ENCODE measurements at regions of chr15 and their contacts with region 1.

Region 1: DNA sequence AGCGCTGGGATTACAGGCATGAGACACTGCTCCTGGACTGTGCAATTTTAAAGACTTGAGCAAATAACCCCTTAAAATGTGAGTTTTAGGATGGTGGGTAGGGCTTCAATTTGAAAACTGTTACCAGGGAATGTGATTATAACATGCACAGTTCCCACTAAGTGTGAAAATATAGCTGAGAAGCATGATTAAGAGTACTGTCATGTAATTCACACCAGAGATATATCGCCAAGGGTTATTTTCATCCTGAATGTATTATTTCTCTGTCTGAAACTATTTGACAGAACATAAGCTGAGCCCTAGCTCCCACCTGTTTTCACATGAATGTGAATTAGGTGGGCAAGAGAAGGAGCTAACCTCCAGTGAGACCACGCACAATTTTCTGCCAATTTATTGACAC is 457.2 kb downstream of the GABRG3 start:
- DNase-seq: no peak
- H3K4me3 ChIP-seq: no peak overlapping the region
- H3K27ac ChIP-seq: no peak overlapping the region
- H3K4me1 ChIP-seq: no peaks in the 10 kb centered on the region
- H3K27me3 ChIP-seq: no peaks in the 10 kb centered on the region
- CTCF ChIP-seq: no peak
- EP300 ChIP-seq: no peak
- POLR2A ChIP-seq: no peak

Region 2: DNA sequence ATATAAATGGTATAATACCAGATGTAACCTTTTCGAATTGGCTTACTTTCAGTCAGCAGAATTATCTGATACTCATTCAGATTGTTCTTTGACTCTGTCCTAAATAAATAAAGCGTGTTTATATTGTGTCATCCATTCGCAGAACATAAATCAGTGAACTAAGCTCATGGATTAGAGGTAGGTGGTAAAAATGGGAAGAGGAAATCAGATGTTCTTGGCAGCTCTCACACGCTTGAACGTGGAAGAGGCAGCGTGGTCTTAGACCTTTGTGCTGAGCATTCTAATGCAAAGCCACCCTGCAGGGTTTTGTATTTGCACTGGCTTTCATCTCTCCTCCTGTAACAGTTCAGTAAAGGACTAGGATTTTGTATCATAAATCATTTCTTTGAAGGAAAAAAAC is 15.7 kb before region 1 on chr15:
- in situ Hi-C with region 1: no loop called
- intact Hi-C with region 1: no loop called
- DNase-seq: no peak
- H3K4me3 ChIP-seq: no peak overlapping the region
- H3K27ac ChIP-seq: no peak overlapping the region
- H3K4me1 ChIP-seq: no peaks in the 10 kb centered on the region
- H3K27me3 ChIP-seq: no peaks in the 10 kb centered on the region
- CTCF ChIP-seq: no peak
- EP300 ChIP-seq: no peak
- POLR2A ChIP-seq: no peak

Region 3: GRCh38 chr15:27454281-27455075 is 26.3 kb after region 1 on chr15:
- in situ Hi-C with region 1: no loop called
- intact Hi-C with region 1: loop called (anchors 2 kb)
- DNase-seq: no peak
- H3K4me3 ChIP-seq: no peak overlapping the region
- H3K27ac ChIP-seq: no peak overlapping the region
- H3K4me1 ChIP-seq: no peaks in the 10 kb centered on the region
- H3K27me3 ChIP-seq: no peaks in the 10 kb centered on the region
- CTCF ChIP-seq: no peak
- EP300 ChIP-seq: no peak
- POLR2A ChIP-seq: no peak

Region 4: DNA sequence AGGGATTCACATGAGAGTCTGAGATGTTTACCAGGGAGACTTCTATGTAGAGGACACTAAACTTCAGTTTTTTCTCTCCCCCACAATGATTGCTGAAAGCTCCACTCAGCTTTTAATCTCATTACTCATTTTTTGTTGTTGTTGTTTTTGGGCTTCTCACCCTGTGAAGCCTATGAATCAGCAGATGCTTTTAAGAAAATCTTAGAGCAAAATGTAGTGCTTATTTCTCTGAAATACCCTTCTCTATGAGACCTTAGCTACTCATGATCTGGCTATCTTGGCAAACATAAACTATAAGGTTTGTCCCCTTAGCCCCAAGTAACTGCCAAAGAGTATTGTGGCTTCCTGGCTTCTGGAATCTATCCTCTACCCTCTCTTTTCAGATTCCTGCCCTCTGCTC is 133.7 kb after region 1 on chr15:
- in situ Hi-C with region 1: no loop called
- intact Hi-C with region 1: no loop called
- DNase-seq: no peak
- H3K4me3 ChIP-seq: no peak overlapping the region
- H3K27ac ChIP-seq: no peak overlapping the region
- H3K4me1 ChIP-seq: no peaks in the 10 kb centered on the region
- H3K27me3 ChIP-seq: no peaks in the 10 kb centered on the region
- CTCF ChIP-seq: no peak
- EP300 ChIP-seq: no peak
- POLR2A ChIP-seq: no peak

Region 5: DNA sequence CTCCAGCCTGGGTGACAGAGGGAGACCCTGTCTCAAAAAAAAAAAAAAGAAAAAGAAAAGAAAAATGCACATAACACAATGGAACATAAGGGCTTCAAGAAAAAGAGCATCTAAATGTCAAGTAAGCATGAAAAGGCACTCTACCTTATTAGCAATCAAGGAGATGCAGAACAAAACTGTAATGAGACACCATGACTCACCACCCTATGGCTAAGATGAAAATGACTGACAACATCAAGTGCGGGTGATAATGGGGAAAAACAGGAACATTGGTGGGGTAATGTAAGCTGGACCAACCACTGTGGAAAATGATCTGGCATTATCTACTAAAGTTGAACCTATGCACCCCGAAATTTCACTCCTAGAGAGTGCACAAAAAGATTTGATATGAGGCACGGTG is 1861.0 kb after region 1 on chr15:
- in situ Hi-C with region 1: no loop called
- intact Hi-C with region 1: no loop called
- DNase-seq: no peak
- H3K4me3 ChIP-seq: no peak overlapping the region
- H3K27ac ChIP-seq: no peak overlapping the region
- H3K4me1 ChIP-seq: no peaks in the 10 kb centered on the region
- H3K27me3 ChIP-seq: no peaks in the 10 kb centered on the region
- CTCF ChIP-seq: no peak
- EP300 ChIP-seq: no peak
- POLR2A ChIP-seq: no peak